ENCODE measurements at regions of chr20 and their contacts with region 1.

Region 1: GRCh38 chr20:4014031-4014474 is 1.3 kb downstream of the RNF24 start:
- DNase-seq: peak; percentile 25
- H3K4me3 ChIP-seq: peak overlapping the region; percentile 83
- H3K27me3 ChIP-seq: no peaks in the 10 kb centered on the region
- CTCF ChIP-seq: peak; percentile 72

Region 2: GRCh38 chr20:3964719-3965118 is 49.3 kb before region 1 on chr20:
- CTCF ChIA-PET with region 1: no interaction called
- POLR2A ChIA-PET with region 1: no interaction called
- DNase-seq: no peak
- H3K4me3 ChIP-seq: no peak overlapping the region
- H3K27me3 ChIP-seq: no peaks in the 10 kb centered on the region
- CTCF ChIP-seq: no peak

Region 3: GRCh38 chr20:4026093-4026601 is 12.1 kb after region 1 on chr20:
- CTCF ChIA-PET with region 1: interaction called, 13 read pairs
- POLR2A ChIA-PET with region 1: no interaction called
- DNase-seq: peak; percentile 52
- H3K4me3 ChIP-seq: no peak overlapping the region
- H3K27me3 ChIP-seq: peaks cover 2% of the 10 kb centered on the region; the same call in 1 of the 2 replicates
- CTCF ChIP-seq: peak; percentile 60

Region 4: DNA sequence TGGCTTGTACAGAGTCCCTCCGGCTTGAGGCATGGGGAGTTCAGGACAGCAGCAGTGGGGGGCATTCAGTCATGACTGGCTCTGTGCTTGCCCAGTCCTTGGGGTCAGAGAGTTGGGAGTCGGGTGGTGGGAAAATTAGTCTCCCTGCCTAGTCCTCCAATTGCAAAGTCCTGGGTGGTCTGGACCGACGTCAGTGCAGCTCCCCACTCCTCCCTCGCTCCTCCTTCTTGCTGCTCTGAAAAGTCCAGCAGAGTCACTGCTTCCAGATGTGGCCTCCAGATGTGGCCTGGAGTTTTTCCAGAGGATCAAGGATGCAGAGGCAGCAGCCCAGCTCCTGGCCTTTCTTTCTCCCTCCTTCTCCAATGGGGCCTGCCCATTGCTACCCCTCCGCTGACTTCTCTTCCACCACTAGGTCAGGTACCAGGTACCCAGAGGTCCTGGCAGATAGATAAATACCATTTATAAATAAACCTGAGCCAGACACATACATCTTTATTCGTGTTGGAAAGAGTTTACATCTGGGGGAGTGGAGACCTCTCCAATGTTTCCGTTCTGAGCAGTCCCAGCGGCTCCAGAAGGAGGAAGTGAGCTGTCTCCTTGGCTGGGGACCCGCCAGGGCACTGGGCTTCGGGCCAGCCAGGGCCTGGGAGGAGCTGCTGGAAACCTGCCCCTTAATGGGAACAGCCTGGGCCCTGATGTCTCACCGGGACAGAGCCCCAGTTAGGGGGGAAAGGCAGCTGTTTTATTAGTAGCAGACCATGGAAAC is 50.3 kb after region 1 on chr20:
- CTCF ChIA-PET with region 1: interaction called, 46 read pairs
- POLR2A ChIA-PET with region 1: no interaction called
- DNase-seq: peak; percentile 78
- H3K4me3 ChIP-seq: no peak overlapping the region
- H3K27me3 ChIP-seq: no peaks in the 10 kb centered on the region
- CTCF ChIP-seq: 0 out of 2 replicates have a peak, but pooled peaks have one; percentile 2

Region 5: DNA sequence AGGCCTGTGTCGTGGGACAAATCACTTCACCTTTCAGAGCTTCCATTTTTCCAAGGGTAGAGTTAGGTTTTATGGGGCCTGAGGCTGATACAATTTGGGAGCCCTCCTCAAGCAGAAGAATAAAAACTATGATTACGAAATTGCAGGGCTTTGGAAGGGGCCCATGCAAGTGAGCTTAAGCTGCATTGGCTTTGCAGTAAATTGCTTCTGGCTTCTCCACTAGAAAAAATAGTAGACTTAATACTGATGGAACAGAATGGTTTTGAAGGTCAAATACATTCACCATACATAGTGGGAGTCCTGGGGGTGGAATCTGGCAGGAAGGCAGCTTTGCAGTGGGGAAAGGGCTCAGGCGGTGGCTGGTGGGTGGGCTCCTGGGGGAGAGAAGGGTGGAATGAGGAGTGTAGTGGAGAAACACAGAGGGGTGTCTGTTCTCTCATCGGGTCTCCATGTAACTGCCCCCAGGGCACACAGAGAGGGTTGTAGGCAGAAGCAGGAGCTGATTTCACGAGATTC is 57.2 kb after region 1 on chr20:
- CTCF ChIA-PET with region 1: interaction called, 46 read pairs
- POLR2A ChIA-PET with region 1: no interaction called
- DNase-seq: no peak
- H3K4me3 ChIP-seq: no peak overlapping the region
- H3K27me3 ChIP-seq: no peaks in the 10 kb centered on the region
- CTCF ChIP-seq: no peak

Region 6: DNA sequence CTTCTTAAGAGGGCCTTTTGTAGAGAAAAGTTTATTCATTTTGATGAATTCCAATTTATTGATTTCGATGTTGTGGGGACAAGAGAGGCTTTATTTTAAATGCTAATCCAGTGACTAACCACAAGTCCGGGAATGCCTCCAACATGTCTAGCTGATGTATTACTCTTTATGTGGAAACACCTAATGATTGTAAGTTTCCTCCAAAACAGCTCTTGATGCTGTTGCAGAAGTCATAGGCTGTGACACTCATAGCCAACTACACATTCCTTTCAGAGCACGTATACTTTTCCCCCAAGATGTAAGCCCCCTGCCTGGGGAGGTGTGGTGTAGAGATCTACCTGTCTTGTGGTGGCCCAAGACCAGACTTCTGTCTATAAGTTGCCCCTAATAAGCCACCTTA is 62.6 kb after region 1 on chr20:
- CTCF ChIA-PET with region 1: interaction called, 50 read pairs
- POLR2A ChIA-PET with region 1: no interaction called
- DNase-seq: peak; percentile 78
- H3K4me3 ChIP-seq: no peak overlapping the region
- H3K27me3 ChIP-seq: no peaks in the 10 kb centered on the region
- CTCF ChIP-seq: no peak

Region 7: GRCh38 chr20:4082406-4083097 is 68.5 kb after region 1 on chr20:
- CTCF ChIA-PET with region 1: interaction called, 50 read pairs
- POLR2A ChIA-PET with region 1: interaction called, 5 read pairs
- DNase-seq: no peak
- H3K4me3 ChIP-seq: no peak overlapping the region
- H3K27me3 ChIP-seq: no peaks in the 10 kb centered on the region
- CTCF ChIP-seq: no peak

Region 8: GRCh38 chr20:4152006-4152695 is 138.1 kb after region 1 on chr20:
- CTCF ChIA-PET with region 1: no interaction called
- POLR2A ChIA-PET with region 1: no interaction called
- DNase-seq: no peak
- H3K4me3 ChIP-seq: no peak overlapping the region
- H3K27me3 ChIP-seq: no peaks in the 10 kb centered on the region
- CTCF ChIP-seq: no peak